CD8-positive, alpha-beta T cell (primary cell): ENCODE measurements at regions of chr11 and their contacts with region 1.

Region 1: DNA sequence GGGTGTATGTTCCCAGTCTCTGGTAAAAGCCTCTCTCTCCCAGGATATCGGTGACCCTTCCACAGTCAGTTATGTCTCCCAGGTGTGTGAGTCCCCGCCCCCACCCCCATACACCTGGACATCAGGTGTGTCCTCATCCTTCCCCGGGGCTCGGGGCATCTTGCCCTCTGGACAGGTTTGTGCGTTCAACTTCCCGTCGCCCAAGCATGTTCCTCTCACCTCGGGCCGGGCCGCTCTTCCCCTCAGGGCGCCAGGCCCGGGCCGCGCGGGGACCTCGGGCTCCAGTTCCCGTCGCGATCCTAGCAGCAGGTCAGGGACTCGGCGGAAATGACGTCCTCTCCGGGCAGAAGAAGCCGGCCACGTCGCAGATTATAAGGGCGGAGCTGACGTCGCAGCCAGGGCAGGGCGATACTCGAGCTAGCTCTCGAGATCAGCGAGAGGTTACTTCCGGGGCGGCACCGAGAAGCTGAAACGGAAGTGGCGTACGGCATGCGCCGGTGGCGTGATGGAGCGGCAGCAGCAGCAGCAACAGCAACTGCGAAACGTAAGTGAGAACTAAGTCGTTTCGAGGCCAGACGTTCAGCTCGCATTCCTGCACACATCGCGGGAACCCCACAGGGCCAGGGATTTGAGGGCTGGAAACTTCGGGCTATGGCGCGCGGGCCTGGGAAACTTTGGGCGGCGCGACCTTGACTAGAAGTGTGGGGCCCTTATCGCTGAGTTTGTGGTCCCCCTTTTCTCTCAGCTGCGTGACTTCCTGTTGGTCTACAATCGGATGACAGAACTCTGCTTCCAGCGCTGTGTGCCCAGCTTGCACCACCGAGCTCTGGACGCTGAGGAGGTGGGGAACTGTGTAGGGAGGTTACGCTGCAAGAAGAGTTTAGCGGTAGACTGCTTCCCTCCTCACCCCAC is at the starts of genes ARFIP2 and TIMM10B:
- DNase-seq: peak; percentile 92 to 99 (median 96)
- ATAC-seq: peak; percentile 95
- H3K4me3 ChIP-seq: peak within 1 kb of the TSS; percentile 76 to 87
- H3K4me3 Mint-ChIP-seq: peak within 1 kb of the TSS; percentile 96
- H3K27ac ChIP-seq: peak within 1 kb of the TSS; percentile 87 to 98
- H3K27ac Mint-ChIP-seq: peak within 1 kb of the TSS; percentile 99
- H3K4me1 ChIP-seq: peaks cover 32% of the 10 kb centered on the region
- H3K4me1 Mint-ChIP-seq: peaks cover 40% of the 10 kb centered on the region
- H3K27me3 ChIP-seq: no peaks in the 10 kb centered on the region
- H3K27me3 Mint-ChIP-seq: no peaks in the 10 kb centered on the region
- CTCF ChIP-seq: no peak
- total RNA-seq, gene ARFIP2: 76.5 to 89.7 TPM
- total RNA-seq, gene TIMM10B: 68.6 to 73.0 TPM

Region 2: GRCh38 chr11:6389921-6390724 is 91.1 kb before region 1 on chr11 and contains the start of gene SMPD1:
- CTCF ChIA-PET with region 1: interaction called, 3 read pairs
- POLR2A ChIA-PET with region 1: interaction called, 10 read pairs
- intact Hi-C with region 1: loop called (anchors 1 kb)
- DNase-seq: peak; percentile 90 to 97 (median 94)
- ATAC-seq: peak; percentile 88
- H3K4me3 ChIP-seq: peak within 1 kb of the TSS; percentile 84 to 90
- H3K4me3 Mint-ChIP-seq: peak within 1 kb of the TSS; percentile 93
- H3K27ac ChIP-seq: peak within 1 kb of the TSS; percentile 85 to 95
- H3K27ac Mint-ChIP-seq: peak within 1 kb of the TSS; percentile 98
- H3K4me1 ChIP-seq: peaks cover 52% of the 10 kb centered on the region
- H3K4me1 Mint-ChIP-seq: peaks cover 68% of the 10 kb centered on the region
- H3K27me3 ChIP-seq: no peaks in the 10 kb centered on the region
- H3K27me3 Mint-ChIP-seq: no peaks in the 10 kb centered on the region
- CTCF ChIP-seq: no peak
- total RNA-seq, gene SMPD1: 53.4 to 53.7 TPM

Region 3: DNA sequence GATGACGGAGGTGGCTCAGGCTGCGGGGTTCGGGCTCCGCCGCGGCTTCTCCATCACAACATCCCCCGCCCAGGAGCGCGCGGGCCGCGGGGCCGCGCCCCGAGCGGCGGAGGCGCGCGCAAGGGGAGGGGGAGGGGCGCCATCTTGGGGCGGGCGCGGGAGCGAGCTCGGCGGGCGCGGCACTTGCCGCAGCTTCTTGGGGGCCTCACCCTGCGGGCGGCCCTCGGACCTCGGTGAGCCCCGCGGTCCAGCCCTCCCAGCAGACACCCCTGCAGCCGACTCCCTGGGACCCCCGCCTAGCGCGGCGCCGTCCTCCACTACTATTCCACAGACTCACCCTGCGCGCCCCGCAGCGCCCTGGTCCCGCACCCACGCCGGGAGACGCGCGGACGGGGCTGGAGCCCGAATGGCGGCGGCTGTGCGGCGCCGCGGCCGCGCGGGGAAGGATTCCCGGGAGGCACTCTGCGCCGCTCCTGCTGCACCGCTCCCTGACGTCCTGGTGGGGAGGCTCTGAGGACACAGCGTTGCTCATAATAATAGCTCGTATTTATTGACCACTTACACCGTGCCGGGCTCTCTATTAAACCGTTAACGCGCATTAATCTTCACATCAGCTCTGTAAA is 62.1 kb before region 1 on chr11 and contains the start of gene APBB1:
- CTCF ChIA-PET with region 1: interaction called, 3 read pairs
- POLR2A ChIA-PET with region 1: no interaction called
- intact Hi-C with region 1: loop called in 1 of 2 experiments (anchors 1 kb)
- DNase-seq: peak; percentile 49 to 88 (median 77)
- ATAC-seq: peak; percentile 69
- H3K4me3 ChIP-seq: peak within 1 kb of the TSS; percentile 51 to 81
- H3K4me3 Mint-ChIP-seq: peak within 1 kb of the TSS; percentile 84
- H3K27ac ChIP-seq: peak within 1 kb of the TSS; percentile 48 to 82
- H3K27ac Mint-ChIP-seq: peak within 1 kb of the TSS; percentile 89
- H3K4me1 ChIP-seq: peaks cover 46% of the 10 kb centered on the region
- H3K4me1 Mint-ChIP-seq: peaks cover 10% of the 10 kb centered on the region
- H3K27me3 ChIP-seq: no peaks in the 10 kb centered on the region
- H3K27me3 Mint-ChIP-seq: peaks cover 3% of the 10 kb centered on the region
- CTCF ChIP-seq: no peak
- total RNA-seq, gene APBB1: 130 to 147 TPM

Region 4: DNA sequence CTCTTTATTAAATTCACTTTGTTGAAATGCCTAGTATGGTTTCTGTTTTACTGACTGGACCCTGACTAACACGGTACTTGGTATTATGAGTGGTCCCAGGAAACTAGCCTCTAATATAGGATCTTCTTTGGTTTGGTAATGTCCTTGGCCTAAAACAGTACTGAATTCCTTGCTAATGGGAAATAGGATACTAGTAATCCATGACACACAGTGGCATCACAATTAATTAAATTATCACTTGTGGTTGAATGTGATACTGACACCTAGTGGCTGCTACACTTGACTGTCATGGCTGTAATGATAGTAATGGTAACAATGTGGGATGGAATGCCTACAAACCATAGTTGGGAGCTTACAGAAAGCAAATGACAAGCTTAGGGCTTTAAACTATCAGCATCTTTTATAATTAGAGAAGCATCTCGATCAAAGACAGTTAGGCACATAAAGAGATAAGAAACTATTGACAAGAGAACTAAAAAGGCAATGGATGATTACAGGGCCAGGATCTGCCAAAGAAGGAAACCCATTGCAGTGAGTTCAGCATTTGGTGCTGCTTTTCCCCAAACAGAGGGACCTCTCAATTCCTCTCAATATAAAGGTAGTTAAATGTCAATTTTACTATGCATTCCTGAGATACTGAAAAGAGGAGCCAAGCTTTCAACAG is 24.4 kb after region 1 on chr11:
- CTCF ChIA-PET with region 1: interaction called, 13 read pairs
- POLR2A ChIA-PET with region 1: no interaction called
- intact Hi-C with region 1: no loop called
- DNase-seq: peak in 3 of 9 experiments; percentile 9 to 64 (median 51)
- ATAC-seq: peak; percentile 61
- H3K4me3 ChIP-seq: no peak overlapping the region
- H3K4me3 Mint-ChIP-seq: no peak overlapping the region
- H3K27ac ChIP-seq: no peak overlapping the region
- H3K27ac Mint-ChIP-seq: no peak overlapping the region
- H3K4me1 ChIP-seq: no peaks in the 10 kb centered on the region
- H3K4me1 Mint-ChIP-seq: peaks cover 4% of the 10 kb centered on the region
- H3K27me3 ChIP-seq: no peaks in the 10 kb centered on the region
- H3K27me3 Mint-ChIP-seq: no peaks in the 10 kb centered on the region
- CTCF ChIP-seq: peak; percentile 73

Region 5: GRCh38 chr11:6612213-6613041 is 131.2 kb after region 1 on chr11 and contains the start of gene TAF10:
- CTCF ChIA-PET with region 1: interaction called, 3 read pairs
- POLR2A ChIA-PET with region 1: interaction called, 14 read pairs
- intact Hi-C with region 1: loop called in 1 of 2 experiments (anchors 1 kb)
- DNase-seq: peak; percentile 85 to 98 (median 97)
- ATAC-seq: peak; percentile 89
- H3K4me3 ChIP-seq: peak within 1 kb of the TSS; percentile 78 to 79
- H3K4me3 Mint-ChIP-seq: peak within 1 kb of the TSS; percentile 92
- H3K27ac ChIP-seq: peak within 1 kb of the TSS; percentile 96 to 98
- H3K27ac Mint-ChIP-seq: peak within 1 kb of the TSS; percentile 95
- H3K4me1 ChIP-seq: peaks cover 33% of the 10 kb centered on the region
- H3K4me1 Mint-ChIP-seq: peaks cover 46% of the 10 kb centered on the region
- H3K27me3 ChIP-seq: no peaks in the 10 kb centered on the region
- H3K27me3 Mint-ChIP-seq: no peaks in the 10 kb centered on the region
- CTCF ChIP-seq: peak; percentile 49
- total RNA-seq, gene TAF10: 158 to 161 TPM